ENCODE measurements at regions of chr1 and their contacts with region 1.

Region 1: GRCh38 chr1:170619241-170620028 is 44.5 kb upstream of the PRRX1 start:
- DNase-seq: no peak
- ATAC-seq: no peak
- H3K4me3 ChIP-seq: no peak overlapping the region
- H3K27ac ChIP-seq: no peak overlapping the region
- H3K4me1 ChIP-seq: no peaks in the 10 kb centered on the region
- H3K27me3 ChIP-seq: no peaks in the 10 kb centered on the region; a peak in 1 of 4 replicates
- CTCF ChIP-seq: no peak
- EP300 ChIP-seq: no peak
- POLR2A ChIP-seq: no peak
- RAD21 ChIP-seq: no peak

Region 2: DNA sequence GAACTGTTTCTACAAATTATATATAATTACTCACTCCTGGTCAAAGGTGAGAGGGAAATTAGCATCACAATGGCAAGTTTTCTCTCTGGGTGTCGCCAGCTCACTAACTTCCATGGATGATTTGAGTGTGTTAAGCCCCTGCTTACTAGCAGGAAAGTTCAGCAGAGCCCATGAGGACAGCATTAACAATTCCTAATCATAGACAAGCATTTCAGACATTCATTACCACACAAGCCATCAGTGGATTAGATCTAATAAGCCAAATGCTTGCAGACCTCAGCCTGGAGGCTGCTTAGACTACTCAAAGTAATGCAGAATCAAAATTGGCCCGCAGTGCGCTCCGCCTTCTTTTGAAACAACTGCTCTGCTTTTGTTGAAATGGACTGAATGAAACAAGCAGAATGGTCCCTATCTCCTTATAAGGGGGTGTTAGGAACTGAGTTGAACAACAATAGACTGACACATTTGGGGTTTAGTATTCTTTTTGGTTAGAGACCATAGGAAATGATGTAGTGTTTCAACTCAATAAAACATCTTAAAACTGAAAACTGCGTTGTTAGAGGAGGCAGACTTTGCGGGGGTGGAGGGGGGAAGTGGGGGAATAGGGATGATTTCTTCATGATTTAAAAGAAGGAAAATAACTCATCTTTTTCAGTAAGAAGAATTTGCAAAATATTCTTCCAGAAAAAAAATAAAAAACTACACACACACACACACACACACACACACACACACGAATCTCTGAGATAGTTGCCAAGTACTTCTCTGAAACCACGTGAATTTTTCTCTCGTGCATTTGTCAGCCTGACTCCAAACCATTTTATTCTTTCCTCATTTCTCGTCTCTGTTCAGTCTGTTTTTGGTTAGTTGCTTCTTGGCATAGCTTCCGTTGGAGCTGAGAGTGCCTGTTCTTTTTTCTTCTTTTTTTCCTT is 32.8 kb before region 1 on chr1:
- CTCF ChIA-PET with region 1: interaction called, 3 read pairs
- POLR2A ChIA-PET with region 1: interaction called, 3 read pairs
- RAD21 ChIA-PET with region 1: interaction called, 21 read pairs
- SMC1A ChIA-PET with region 1: interaction called, 25 read pairs
- in situ Hi-C with region 1: no loop called
- intact Hi-C with region 1: no loop called
- DNase-seq: no peak
- ATAC-seq: peak; percentile 74
- H3K4me3 ChIP-seq: no peak overlapping the region
- H3K27ac ChIP-seq: no peak overlapping the region
- H3K4me1 ChIP-seq: no peaks in the 10 kb centered on the region
- H3K27me3 ChIP-seq: no peaks in the 10 kb centered on the region
- CTCF ChIP-seq: no peak
- EP300 ChIP-seq: no peak
- POLR2A ChIP-seq: no peak
- RAD21 ChIP-seq: no peak

Region 3: GRCh38 chr1:170604065-170604464 is 15.4 kb before region 1 on chr1:
- CTCF ChIA-PET with region 1: interaction called, 5 read pairs
- POLR2A ChIA-PET with region 1: no interaction called
- RAD21 ChIA-PET with region 1: interaction called, 3 read pairs
- SMC1A ChIA-PET with region 1: interaction called, 93 read pairs
- in situ Hi-C with region 1: no loop called
- intact Hi-C with region 1: no loop called
- DNase-seq: no peak
- ATAC-seq: no peak
- H3K4me3 ChIP-seq: no peak overlapping the region
- H3K27ac ChIP-seq: no peak overlapping the region
- H3K4me1 ChIP-seq: no peaks in the 10 kb centered on the region
- H3K27me3 ChIP-seq: no peaks in the 10 kb centered on the region
- CTCF ChIP-seq: no peak
- EP300 ChIP-seq: no peak
- POLR2A ChIP-seq: no peak
- RAD21 ChIP-seq: no peak

Region 4: GRCh38 chr1:170640581-170640980 is 21.1 kb after region 1 on chr1:
- CTCF ChIA-PET with region 1: interaction called, 3 read pairs
- POLR2A ChIA-PET with region 1: interaction called, 5 read pairs
- RAD21 ChIA-PET with region 1: interaction called, 19 read pairs
- SMC1A ChIA-PET with region 1: interaction called, 12 read pairs
- in situ Hi-C with region 1: no loop called
- intact Hi-C with region 1: no loop called
- DNase-seq: no peak
- ATAC-seq: peak; percentile 49; the same call in 2 of the 3 replicates
- H3K4me3 ChIP-seq: no peak overlapping the region
- H3K27ac ChIP-seq: no peak overlapping the region
- H3K4me1 ChIP-seq: no peaks in the 10 kb centered on the region
- H3K27me3 ChIP-seq: no peaks in the 10 kb centered on the region
- CTCF ChIP-seq: no peak
- EP300 ChIP-seq: no peak
- POLR2A ChIP-seq: no peak
- RAD21 ChIP-seq: no peak

Measured in GM12878 (cell line).